ENCODE measurements at regions of chr11 and their contacts with region 1.

Region 1: GRCh38 chr11:27183672-27184457 is 143.2 kb downstream of the BBOX1 start:
- DNase-seq: peak; percentile 56
- H3K4me3 Mint-ChIP-seq: no peak overlapping the region
- H3K27ac Mint-ChIP-seq: no peak overlapping the region
- H3K4me1 Mint-ChIP-seq: no peaks in the 10 kb centered on the region
- H3K27me3 Mint-ChIP-seq: peaks cover 8% of the 10 kb centered on the region

Region 2: GRCh38 chr11:27208846-27209245 is 25.0 kb after region 1 on chr11:
- CTCF ChIA-PET with region 1: no interaction called
- DNase-seq: no peak
- H3K4me3 Mint-ChIP-seq: no peak overlapping the region
- H3K27ac Mint-ChIP-seq: no peak overlapping the region
- H3K4me1 Mint-ChIP-seq: no peaks in the 10 kb centered on the region
- H3K27me3 Mint-ChIP-seq: peaks cover 7% of the 10 kb centered on the region

Region 3: GRCh38 chr11:27234043-27234668 is 50.3 kb after region 1 on chr11:
- CTCF ChIA-PET with region 1: no interaction called
- DNase-seq: no peak
- H3K4me3 Mint-ChIP-seq: no peak overlapping the region
- H3K27ac Mint-ChIP-seq: no peak overlapping the region
- H3K4me1 Mint-ChIP-seq: no peaks in the 10 kb centered on the region
- H3K27me3 Mint-ChIP-seq: peaks cover 3% of the 10 kb centered on the region

Region 4: GRCh38 chr11:27485930-27486773 is 302.3 kb after region 1 on chr11:
- CTCF ChIA-PET with region 1: interaction called, 40 read pairs
- DNase-seq: peak; percentile 45
- H3K4me3 Mint-ChIP-seq: no peak overlapping the region
- H3K27ac Mint-ChIP-seq: no peak overlapping the region
- H3K4me1 Mint-ChIP-seq: no peaks in the 10 kb centered on the region
- H3K27me3 Mint-ChIP-seq: no peaks in the 10 kb centered on the region

Region 5: GRCh38 chr11:27497284-27497866 is 313.5 kb after region 1 on chr11:
- CTCF ChIA-PET with region 1: interaction called, 10 read pairs
- DNase-seq: no peak
- H3K4me3 Mint-ChIP-seq: no peak overlapping the region
- H3K27ac Mint-ChIP-seq: no peak overlapping the region
- H3K4me1 Mint-ChIP-seq: peaks cover 6% of the 10 kb centered on the region
- H3K27me3 Mint-ChIP-seq: no peaks in the 10 kb centered on the region

Measured in activated naive CD4-positive, alpha-beta T cell treated with anti-CD3 and anti-CD28 coated beads, Interleukin-2, amount 10 ng/mL, durations not matched to agents 7 days and 5 days (primary cell).